GM10248 (cell line): ENCODE measurements at regions of chr1 and their contacts with region 1.

Region 1: DNA sequence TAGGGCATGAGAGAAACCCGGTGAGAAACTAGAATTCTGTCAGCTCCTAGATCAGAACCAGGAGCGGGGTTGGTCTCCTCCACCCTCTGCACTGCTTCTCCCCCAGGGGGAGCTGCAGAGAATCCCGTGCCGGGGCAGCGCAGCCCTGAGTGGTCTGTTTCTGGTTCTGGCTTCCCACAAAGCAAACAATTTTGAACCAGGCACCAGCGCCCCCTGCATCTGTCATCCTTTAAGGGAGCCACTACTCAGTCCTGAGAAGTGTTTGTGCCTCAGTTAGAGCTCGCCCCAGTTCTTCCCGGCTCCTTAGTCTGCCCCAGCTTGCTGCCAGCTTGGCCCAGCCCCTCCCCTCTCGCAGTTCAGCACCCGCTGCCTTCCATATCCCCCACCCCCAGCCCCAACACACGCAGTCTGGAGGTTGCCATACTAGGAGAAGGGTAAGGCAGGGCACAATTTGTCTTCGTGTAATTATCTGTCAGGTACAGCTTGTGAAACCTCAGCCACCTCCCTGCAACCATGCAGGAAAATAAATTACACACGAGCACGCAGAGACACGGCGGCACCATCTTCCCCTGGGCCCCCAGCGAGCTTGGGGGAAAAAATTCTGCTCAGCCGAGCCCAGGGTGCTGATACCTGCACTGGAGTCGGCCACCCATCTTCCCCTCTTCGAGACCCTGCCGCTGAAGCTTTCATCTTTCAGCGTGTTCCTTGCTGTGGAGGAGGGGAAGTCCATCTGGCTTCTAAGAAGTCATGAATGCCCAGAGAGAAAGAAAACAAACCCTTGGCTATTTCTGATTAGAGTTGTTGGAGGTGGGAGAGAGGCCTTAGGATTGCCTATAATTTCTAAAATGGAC is 62.6 kb upstream of the CD1D start:
- DNase-seq: peak; percentile 43
- CTCF ChIP-seq: peak; percentile 44

Region 2: GRCh38 chr1:158095737-158096335 is 22.2 kb before region 1 on chr1:
- CTCF ChIA-PET with region 1: interaction called, 118 read pairs
- POLR2A ChIA-PET with region 1: no interaction called
- DNase-seq: peak; percentile 74
- CTCF ChIP-seq: peak; percentile 65

Region 3: GRCh38 chr1:158257888-158258287 is 139.8 kb after region 1 on chr1:
- CTCF ChIA-PET with region 1: no interaction called
- POLR2A ChIA-PET with region 1: no interaction called
- DNase-seq: no peak
- CTCF ChIP-seq: no peak